ENCODE measurements at regions of chr7 and their contacts with region 1.

Region 1: GRCh38 chr7:113710310-113711106 is 208.3 kb downstream of the PPP1R3A start:
- DNase-seq: peak; percentile 45 to 66
- H3K4me3 ChIP-seq: no peak overlapping the region
- H3K27ac ChIP-seq: no peak overlapping the region
- H3K4me1 ChIP-seq: no peaks in the 10 kb centered on the region
- H3K27me3 ChIP-seq: no peaks in the 10 kb centered on the region
- CTCF ChIP-seq: peak; percentile 97

Region 2: GRCh38 chr7:112272921-112273561 is 1437.5 kb before region 1 on chr7:
- CTCF ChIA-PET with region 1: interaction called, 18 read pairs
- POLR2A ChIA-PET with region 1: no interaction called
- intact Hi-C with region 1: no loop called
- DNase-seq: no peak
- H3K4me3 ChIP-seq: no peak overlapping the region
- H3K27ac ChIP-seq: no peak overlapping the region
- H3K4me1 ChIP-seq: no peaks in the 10 kb centered on the region
- H3K27me3 ChIP-seq: no peaks in the 10 kb centered on the region
- CTCF ChIP-seq: no peak

Region 3: GRCh38 chr7:113752289-113752688 is 41.8 kb after region 1 on chr7:
- CTCF ChIA-PET with region 1: no interaction called
- POLR2A ChIA-PET with region 1: no interaction called
- intact Hi-C with region 1: no loop called
- DNase-seq: no peak
- H3K4me3 ChIP-seq: no peak overlapping the region
- H3K27ac ChIP-seq: no peak overlapping the region
- H3K4me1 ChIP-seq: no peaks in the 10 kb centered on the region
- H3K27me3 ChIP-seq: no peaks in the 10 kb centered on the region
- CTCF ChIP-seq: no peak

Measured in PC-9 (cell line).